ENCODE measurements at regions of chr7 and their contacts with region 1.

Region 1: DNA sequence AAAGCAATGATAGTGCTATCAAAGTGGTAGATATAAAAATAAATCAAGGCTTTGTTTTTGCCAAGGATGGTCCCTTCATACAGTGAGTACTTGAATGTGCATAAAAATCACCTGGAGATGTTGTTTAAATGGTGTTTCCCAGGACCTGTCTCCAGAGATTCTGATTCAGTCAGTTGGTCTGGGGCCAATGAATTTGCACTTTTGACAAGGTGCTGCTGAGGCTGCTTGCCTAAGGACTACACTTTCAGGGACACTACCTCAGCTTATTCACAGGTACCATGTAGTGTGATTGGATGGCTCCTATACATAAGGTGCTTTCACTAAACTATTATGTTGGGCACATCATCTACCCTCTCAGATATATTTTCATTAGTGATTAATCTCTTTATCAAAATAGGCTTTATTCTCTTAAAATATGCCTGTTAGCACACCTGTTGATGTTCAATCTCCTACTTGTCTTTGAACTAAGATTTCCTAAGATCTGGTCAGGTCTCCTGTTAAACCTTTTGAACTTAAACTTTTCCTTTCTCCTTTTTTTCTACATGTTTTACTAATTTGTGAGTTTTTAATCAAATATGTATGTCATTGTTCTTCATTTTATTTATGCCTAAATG is 24.3 kb downstream of the CAPZA2 start:
- DNase-seq: no peak
- ATAC-seq: no peak
- H3K4me3 ChIP-seq: no peak overlapping the region
- H3K27ac ChIP-seq: no peak overlapping the region
- H3K4me1 ChIP-seq: no peaks in the 10 kb centered on the region
- H3K27me3 ChIP-seq: no peaks in the 10 kb centered on the region
- CTCF ChIP-seq: no peak

Region 2: DNA sequence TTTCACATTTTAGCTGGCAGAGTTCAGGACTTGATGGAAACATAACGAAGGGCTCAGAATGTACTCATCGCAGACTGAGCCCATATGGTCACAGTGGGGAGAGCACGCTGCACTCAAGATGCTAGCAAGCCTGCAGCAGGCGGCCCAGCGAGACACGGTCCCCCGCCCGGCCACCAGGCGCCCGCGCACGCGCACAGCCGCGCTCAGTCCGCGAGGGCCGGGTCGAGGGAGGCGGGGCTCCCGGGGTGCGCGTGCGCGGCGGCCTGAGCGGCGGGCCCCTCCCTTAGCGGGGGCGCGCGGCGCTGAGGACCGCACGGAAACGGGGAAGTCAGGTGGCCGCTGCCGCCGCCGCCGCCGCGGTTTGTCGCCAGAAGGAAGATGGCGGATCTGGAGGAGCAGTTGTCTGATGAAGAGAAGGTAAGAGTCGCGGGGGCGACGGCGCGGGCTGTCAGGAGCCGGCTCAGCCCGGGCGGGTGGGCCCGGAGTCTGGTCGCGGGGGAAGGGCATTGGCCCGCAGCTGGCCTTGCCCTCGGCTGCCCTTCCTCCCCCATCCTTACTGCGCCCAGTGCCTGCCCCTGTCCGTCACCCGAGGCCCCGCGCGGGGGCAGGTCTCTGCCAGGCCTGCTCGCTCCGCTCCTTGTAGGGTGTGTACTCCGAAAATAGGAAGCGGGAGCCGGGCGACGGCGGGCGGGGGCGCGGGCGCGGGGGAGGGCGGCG is 24.3 kb before region 1 on chr7 and contains the start of gene CAPZA2:
- CTCF ChIA-PET with region 1: interaction called, 15 read pairs
- POLR2A ChIA-PET with region 1: no interaction called
- in situ Hi-C with region 1: no loop called
- intact Hi-C with region 1: no loop called
- DNase-seq: peak; percentile 43
- ATAC-seq: peak; percentile 96
- H3K4me3 ChIP-seq: peak within 1 kb of the TSS; percentile 92 to 97
- H3K27ac ChIP-seq: peak within 1 kb of the TSS; percentile 92
- H3K4me1 ChIP-seq: 0 out of 2 replicates have a peak, but pooled peaks cover 4% of the 10 kb centered on the region
- H3K27me3 ChIP-seq: no peaks in the 10 kb centered on the region
- CTCF ChIP-seq: no peak; the same call in 1 of the 2 replicates
- total RNA-seq, gene CAPZA2: 195 TPM

Measured in Panc1 (cell line).